Endothelial cell of umbilical vein (primary cell): ENCODE measurements at regions of chr2 and their contacts with region 1.

Region 1: DNA sequence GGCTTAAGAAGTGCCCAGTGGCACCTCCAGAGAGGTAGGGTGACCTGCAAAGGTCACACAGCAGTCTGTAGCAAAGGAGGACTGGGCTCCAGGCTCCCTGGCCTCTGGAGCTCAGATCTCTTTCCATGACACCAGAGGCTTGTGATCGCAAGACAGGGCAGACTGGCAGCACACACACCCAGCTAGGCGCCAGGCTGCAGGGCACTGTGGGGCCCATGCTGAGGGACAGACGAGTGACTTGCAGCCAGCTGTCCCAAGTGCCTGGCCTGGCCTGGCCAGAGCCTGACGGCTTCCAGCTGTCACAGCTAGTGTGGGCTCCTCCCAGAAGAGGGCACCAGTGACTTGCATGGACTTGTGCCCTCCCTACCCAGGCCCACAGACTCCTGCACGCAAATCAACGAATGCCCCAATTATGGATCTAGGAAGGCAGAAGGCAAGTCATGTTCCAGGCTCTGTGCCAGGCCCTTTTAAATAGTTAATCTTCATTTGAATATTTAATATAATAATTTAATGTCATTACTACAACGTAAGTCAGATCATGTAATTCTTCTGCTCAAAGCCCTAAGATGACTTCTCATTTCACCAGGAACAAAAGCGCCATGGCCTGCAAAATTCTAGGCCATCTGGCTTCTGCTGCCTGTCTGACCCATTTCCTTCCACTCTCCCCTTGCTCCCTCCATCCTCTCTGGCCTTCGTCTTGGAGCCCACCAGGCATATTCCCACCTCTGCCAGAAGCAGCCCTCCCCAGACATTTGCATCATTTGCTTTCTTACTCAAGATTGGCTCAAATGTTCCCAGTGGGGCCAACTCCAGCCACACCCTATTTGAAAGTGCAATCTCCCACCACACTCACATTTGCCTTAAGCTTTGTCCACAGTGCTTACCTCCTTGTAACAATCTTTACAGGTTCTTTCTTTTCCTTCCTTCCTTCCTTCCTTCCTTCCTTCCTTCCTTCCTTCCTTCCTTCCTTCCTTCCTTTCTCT is 3.7 kb upstream of the SPEG start:
- DNase-seq: peak; percentile 27
- H3K4me3 ChIP-seq: no peak overlapping the region
- H3K27ac ChIP-seq: no peak overlapping the region
- H3K4me1 ChIP-seq: no peaks in the 10 kb centered on the region
- H3K27me3 ChIP-seq: peaks cover 16 to 20% of the 10 kb centered on the region in 2 experiments
- CTCF ChIP-seq: peak in 1 of 2 donors; percentile 40
- POLR2A ChIP-seq: no peak

Region 2: DNA sequence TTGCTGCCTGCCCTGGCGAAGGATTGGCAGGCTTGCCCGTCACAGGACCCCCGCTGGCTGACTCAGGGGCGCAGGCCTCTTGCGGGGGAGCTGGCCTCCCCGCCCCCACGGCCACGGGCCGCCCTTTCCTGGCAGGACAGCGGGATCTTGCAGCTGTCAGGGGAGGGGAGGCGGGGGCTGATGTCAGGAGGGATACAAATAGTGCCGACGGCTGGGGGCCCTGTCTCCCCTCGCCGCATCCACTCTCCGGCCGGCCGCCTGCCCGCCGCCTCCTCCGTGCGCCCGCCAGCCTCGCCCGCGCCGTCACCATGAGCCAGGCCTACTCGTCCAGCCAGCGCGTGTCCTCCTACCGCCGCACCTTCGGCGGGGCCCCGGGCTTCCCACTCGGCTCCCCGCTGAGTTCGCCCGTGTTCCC is 12.8 kb before region 1 on chr2 and contains the start of gene DES:
- CTCF ChIA-PET with region 1: interaction called, 3 read pairs
- POLR2A ChIA-PET with region 1: no interaction called
- dilution Hi-C with region 1: no loop called
- intact Hi-C with region 1: loop called (anchors 1 kb)
- DNase-seq: no peak
- H3K4me3 ChIP-seq: no peak within 1 kb of the TSS
- H3K27ac ChIP-seq: no peak within 1 kb of the TSS
- H3K4me1 ChIP-seq: no peaks in the 10 kb centered on the region
- H3K27me3 ChIP-seq: peaks cover 26 to 30% of the 10 kb centered on the region in 2 experiments
- CTCF ChIP-seq: no peak
- POLR2A ChIP-seq: no peak
- total RNA-seq, gene DES: not detected in 2 replicates